GM23248 (cell line): ENCODE measurements at regions of chr7 and their contacts with region 1.

Region 1: DNA sequence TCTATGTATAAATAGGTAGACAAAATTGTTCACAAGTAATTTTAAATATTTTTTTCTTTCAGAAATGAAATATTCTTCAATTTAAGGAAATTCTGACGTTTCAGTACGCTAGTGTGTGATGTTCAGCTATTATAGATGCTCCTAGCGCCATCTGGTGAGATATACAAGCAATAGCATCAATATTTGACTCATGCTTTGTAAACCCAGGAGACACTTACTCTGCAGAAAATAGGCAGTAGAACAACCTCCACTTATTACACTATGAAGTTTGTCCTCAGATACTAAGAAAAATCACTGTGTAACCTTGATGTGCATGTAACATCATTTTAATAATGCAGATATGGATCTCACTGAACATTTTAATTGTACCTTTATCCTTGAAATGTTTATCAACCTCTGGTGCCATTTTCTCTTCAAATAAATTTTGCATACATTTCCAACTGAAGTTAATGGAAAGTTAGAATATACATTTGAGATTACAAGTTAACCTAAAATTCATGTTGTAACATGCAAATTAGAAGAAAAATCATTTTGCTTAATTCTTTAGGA is 151.5 kb upstream of the FAM3C start:
- DNase-seq: peak; percentile 87
- H3K4me3 ChIP-seq: no peak overlapping the region
- H3K27ac ChIP-seq: no peak overlapping the region
- H3K4me1 ChIP-seq: peaks cover 15% of the 10 kb centered on the region; the same call in 1 of the 2 replicates
- H3K27me3 ChIP-seq: peaks cover 49% of the 10 kb centered on the region

Region 2: GRCh38 chr7:121366852-121367431 is 180.7 kb before region 1 on chr7:
- in situ Hi-C with region 1: loop called (anchors 5 kb)
- DNase-seq: peak; percentile 51
- H3K4me3 ChIP-seq: no peak overlapping the region
- H3K27ac ChIP-seq: no peak overlapping the region
- H3K4me1 ChIP-seq: peaks cover 2% of the 10 kb centered on the region; the same call in 1 of the 2 replicates
- H3K27me3 ChIP-seq: no peaks in the 10 kb centered on the region

Region 3: DNA sequence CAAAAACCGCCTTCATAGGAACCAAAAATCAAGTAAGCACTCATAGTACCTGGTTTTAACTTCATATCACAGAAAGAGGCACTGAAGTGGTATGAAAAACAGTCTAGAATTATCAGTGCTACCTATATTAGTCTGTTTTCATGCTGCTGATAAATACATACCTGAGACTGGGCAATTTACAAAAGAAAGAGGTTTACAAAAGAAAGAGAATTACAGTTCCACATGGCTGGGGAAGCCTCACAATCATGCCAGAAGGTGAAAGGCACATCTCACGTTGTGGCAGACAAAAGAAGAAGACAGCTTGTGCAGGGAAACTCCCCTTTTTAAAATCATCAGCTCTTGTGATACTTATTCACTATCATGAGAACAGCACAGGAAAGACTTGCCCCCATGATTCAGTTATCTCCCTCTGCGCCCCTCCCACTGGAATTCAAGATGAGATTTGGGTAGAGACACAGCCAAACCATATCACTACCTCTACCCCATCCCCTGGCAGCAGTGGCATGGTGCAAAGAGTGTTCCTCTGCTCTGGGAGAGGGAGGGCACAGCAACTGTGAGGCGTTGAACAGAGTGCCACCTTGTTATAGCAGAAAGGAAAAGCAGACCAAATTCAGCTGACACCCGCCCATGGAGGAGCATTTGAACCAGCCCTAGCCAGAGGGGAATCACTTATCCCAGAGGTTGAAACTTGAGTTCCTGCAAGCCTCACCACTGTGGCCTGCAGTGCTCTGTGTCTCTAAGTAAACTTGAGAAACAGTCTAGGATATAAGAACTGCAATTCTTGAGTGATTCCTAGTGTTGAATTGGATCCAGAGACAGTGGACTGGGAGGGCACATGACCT is 263.4 kb after region 1 on chr7:
- in situ Hi-C with region 1: no loop called
- DNase-seq: no peak
- H3K4me3 ChIP-seq: no peak overlapping the region
- H3K27ac ChIP-seq: no peak overlapping the region
- H3K4me1 ChIP-seq: no peaks in the 10 kb centered on the region
- H3K27me3 ChIP-seq: no peaks in the 10 kb centered on the region